ENCODE measurements at regions of chr2 and their contacts with region 1.

Region 1: DNA sequence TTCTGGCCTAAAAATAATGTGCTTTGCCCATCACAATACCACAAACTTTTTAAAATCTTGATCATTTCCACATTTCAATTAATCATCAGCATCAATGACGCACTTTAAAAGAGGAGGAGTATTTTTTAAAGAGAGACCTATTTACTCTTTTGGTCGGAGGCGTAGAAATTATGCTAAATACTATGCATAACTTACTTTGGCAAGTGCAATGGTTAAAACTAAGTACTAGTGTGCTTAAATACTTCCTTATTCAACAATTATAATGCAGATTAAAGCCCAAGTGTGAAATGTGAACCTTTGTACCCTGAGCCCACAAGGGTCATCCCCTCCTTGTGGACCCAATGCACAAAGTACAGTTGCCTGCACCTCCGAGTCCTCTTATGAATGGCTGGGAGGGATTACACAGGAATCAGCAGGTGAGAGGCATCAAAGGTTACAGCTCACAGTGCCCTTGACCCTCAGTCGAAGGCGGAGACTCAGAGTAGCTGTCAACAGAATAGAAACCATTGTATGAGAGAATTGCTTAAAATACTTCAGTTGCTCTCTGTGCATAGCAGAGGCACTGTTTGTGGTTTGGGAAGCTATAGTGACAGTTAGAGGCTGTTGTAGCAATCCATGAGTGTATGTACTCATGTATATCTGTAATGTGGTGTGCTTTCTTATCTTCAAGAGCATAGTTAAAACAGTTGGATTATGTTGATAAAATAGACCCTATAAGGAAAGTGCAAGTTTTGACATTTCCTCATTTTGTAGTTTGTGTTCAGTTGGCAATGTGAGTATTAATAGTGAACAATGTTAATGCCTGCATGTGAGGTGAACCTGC is 151.7 kb upstream of the ITGA4 start:
- DNase-seq: peak; percentile 80
- ATAC-seq: peak; percentile 78
- H3K4me3 Mint-ChIP-seq: peak overlapping the region; percentile 76
- H3K27ac Mint-ChIP-seq: peak overlapping the region; percentile 93
- H3K4me1 Mint-ChIP-seq: peaks cover 67% of the 10 kb centered on the region
- H3K27me3 Mint-ChIP-seq: no peaks in the 10 kb centered on the region

Region 2: GRCh38 chr2:181123798-181124231 is 181.7 kb before region 1 on chr2:
- CTCF ChIA-PET with region 1: interaction called, 3 read pairs
- POLR2A ChIA-PET with region 1: interaction called, 22 read pairs
- DNase-seq: peak; percentile 85
- ATAC-seq: peak; percentile 94
- H3K4me3 Mint-ChIP-seq: peak overlapping the region; percentile 77
- H3K27ac Mint-ChIP-seq: peak overlapping the region; percentile 86
- H3K4me1 Mint-ChIP-seq: peaks cover 70% of the 10 kb centered on the region
- H3K27me3 Mint-ChIP-seq: no peaks in the 10 kb centered on the region

Region 3: GRCh38 chr2:181285116-181285515 is 20.4 kb before region 1 on chr2:
- CTCF ChIA-PET with region 1: no interaction called
- POLR2A ChIA-PET with region 1: no interaction called
- DNase-seq: no peak
- ATAC-seq: no peak
- H3K4me3 Mint-ChIP-seq: no peak overlapping the region
- H3K27ac Mint-ChIP-seq: no peak overlapping the region
- H3K4me1 Mint-ChIP-seq: peaks cover 31% of the 10 kb centered on the region
- H3K27me3 Mint-ChIP-seq: no peaks in the 10 kb centered on the region

Region 4: GRCh38 chr2:181466661-181467576 is 161.4 kb after region 1 on chr2:
- CTCF ChIA-PET with region 1: interaction called, 18 read pairs
- POLR2A ChIA-PET with region 1: interaction called, 249 read pairs
- DNase-seq: peak; percentile 90
- ATAC-seq: peak; percentile 34
- H3K4me3 Mint-ChIP-seq: peak overlapping the region; percentile 22
- H3K27ac Mint-ChIP-seq: peak overlapping the region; percentile 62
- H3K4me1 Mint-ChIP-seq: peaks cover 85% of the 10 kb centered on the region
- H3K27me3 Mint-ChIP-seq: no peaks in the 10 kb centered on the region